CD4-positive, alpha-beta T cell (primary cell): ENCODE measurements at regions of chr6 and their contacts with region 1.

Region 1: DNA sequence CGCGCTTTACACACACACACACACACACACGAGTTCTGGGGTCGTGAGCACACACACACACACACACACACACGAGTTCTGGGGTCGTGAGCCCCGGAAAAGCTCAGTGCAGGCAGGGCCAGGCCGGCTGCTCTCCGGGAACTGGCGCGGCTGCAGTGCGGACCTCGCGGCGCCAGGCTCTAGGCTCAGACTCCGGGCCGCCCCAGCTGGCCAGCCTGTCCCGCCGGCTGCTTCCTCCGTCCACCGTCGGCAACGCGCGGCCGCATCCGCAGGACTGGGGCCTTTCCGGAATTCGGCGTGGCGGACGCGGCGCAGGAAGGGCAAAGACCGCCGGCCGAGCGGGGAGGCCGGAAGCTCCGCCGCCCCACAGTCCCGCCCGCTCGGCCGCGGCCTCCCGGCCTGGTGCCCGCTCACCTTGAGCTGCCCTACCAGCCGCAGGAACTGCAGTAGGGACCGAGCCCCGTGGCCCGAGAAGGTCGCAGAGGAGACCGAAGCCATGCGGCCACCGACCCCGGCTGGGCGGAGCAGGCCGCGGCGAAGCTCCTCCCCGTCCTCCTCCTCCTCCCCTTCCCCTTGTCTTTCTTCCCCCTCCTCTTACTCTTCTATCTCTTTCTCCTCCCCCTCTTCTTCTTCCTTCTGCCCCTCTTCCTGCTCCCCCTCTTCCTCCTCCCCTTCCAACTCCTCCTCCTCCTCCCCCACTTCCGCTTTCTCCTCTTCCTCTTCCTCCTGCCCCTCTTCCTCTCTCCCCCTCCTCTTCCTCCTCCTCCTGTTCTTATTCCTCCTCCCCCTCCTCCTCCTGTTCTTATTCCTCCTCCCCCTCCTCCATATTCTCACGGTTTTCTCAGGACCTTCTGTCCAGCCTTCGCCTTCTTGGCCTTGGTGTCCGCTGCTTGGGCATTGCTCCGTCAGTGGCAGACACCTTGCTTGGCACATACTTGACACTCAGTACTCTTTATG is at the start of gene HDDC2:
- DNase-seq: peak in 13 of 14 experiments; percentile 9 to 67 (median 37)
- ATAC-seq: peak; percentile 33
- H3K4me3 ChIP-seq: peak within 1 kb of the TSS; percentile 64
- H3K4me3 Mint-ChIP-seq: peak within 1 kb of the TSS; percentile 91
- H3K27ac ChIP-seq: peak within 1 kb of the TSS; percentile 66 to 70
- H3K27ac Mint-ChIP-seq: peak within 1 kb of the TSS; percentile 90
- H3K4me1 ChIP-seq: peaks cover 32% of the 10 kb centered on the region
- H3K4me1 Mint-ChIP-seq: peaks cover 64% of the 10 kb centered on the region
- H3K27me3 ChIP-seq: no peaks in the 10 kb centered on the region
- H3K27me3 Mint-ChIP-seq: peaks cover 5% of the 10 kb centered on the region
- CTCF ChIP-seq: no peak
- total RNA-seq, gene HDDC2: 19.4 to 21.6 TPM

Region 2: GRCh38 chr6:127212376-127212775 is 1910.7 kb after region 1 on chr6:
- CTCF ChIA-PET with region 1: no interaction called
- POLR2A ChIA-PET with region 1: no interaction called
- intact Hi-C with region 1: loop called in 1 of 2 experiments (anchors 5 kb)
- DNase-seq: no peak
- ATAC-seq: no peak
- H3K4me3 ChIP-seq: no peak overlapping the region
- H3K4me3 Mint-ChIP-seq: no peak overlapping the region
- H3K27ac ChIP-seq: no peak overlapping the region
- H3K27ac Mint-ChIP-seq: no peak overlapping the region
- H3K4me1 ChIP-seq: no peaks in the 10 kb centered on the region
- H3K4me1 Mint-ChIP-seq: no peaks in the 10 kb centered on the region
- H3K27me3 ChIP-seq: peaks cover 8 to 20% of the 10 kb centered on the region in 2 experiments
- H3K27me3 Mint-ChIP-seq: peaks cover 55% of the 10 kb centered on the region
- CTCF ChIP-seq: no peak